Adrenal gland (tissue), 19 donors: ENCODE measurements at regions of chr3 and their contacts with region 1.

Region 1: GRCh38 chr3:135503760-135504686 is 461.5 kb upstream of the PPP2R3A start:
- DNase-seq: peak; percentile 76 to 92 (median 82)
- H3K4me3 ChIP-seq: no peak overlapping the region
- H3K27ac ChIP-seq: peak overlapping the region in 1 of 5 donors; percentile 18
- H3K4me1 ChIP-seq: no peaks in the 10 kb centered on the region
- H3K27me3 ChIP-seq: no peaks in the 10 kb centered on the region
- CTCF ChIP-seq: peak; percentile 57 to 75 (median 70)
- POLR2A ChIP-seq: no peak

Region 2: GRCh38 chr3:134794950-134795745 is 708.9 kb before region 1 on chr3 and contains the start of gene EPHB1:
- intact Hi-C with region 1: loop called in 1 of 2 experiments (anchors 5 kb)
- DNase-seq: peak; percentile 77 to 91 (median 78)
- H3K4me3 ChIP-seq: peak within 1 kb of the TSS in 2 of 4 donors; percentile 40 to 56
- H3K27ac ChIP-seq: no peak within 1 kb of the TSS
- H3K4me1 ChIP-seq: peaks cover 5 to 12% of the 10 kb centered on the region in 2 donors
- H3K27me3 ChIP-seq: peaks cover 26% of the 10 kb centered on the region
- CTCF ChIP-seq: peak; percentile 68 to 85 (median 80)
- POLR2A ChIP-seq: no peak
- total RNA-seq, gene EPHB1: 0.12 to 3.4 (median 1.0) TPM

Region 3: DNA sequence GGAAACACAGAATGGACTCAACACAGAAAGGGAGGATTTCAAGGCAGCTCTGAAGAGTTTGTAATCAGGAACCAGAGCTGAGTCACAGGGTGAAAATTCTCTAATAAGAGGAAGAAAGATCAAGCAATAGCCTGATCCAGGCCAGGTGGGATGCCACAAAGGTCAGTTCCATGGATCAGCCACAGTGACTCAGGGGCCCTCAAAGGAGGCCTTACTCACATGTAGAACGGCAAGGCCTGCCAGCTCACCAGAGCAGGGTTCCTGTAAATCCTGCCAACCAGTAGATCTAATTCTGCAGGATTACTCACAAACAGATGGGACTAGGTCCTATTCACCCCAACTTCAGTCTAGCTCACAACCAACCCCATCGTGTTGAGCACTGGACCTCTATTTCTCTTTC is 383.2 kb after region 1 on chr3:
- intact Hi-C with region 1: loop called in 1 of 2 experiments (anchors 5 kb)
- DNase-seq: peak in 5 of 7 donors; percentile 30 to 74 (median 44)
- H3K4me3 ChIP-seq: no peak overlapping the region
- H3K27ac ChIP-seq: no peak overlapping the region
- H3K4me1 ChIP-seq: no peaks in the 10 kb centered on the region
- H3K27me3 ChIP-seq: no peaks in the 10 kb centered on the region
- CTCF ChIP-seq: no peak
- POLR2A ChIP-seq: no peak